Natural killer cell (primary cell): ENCODE measurements at regions of chr3 and their contacts with region 1.

Region 1: DNA sequence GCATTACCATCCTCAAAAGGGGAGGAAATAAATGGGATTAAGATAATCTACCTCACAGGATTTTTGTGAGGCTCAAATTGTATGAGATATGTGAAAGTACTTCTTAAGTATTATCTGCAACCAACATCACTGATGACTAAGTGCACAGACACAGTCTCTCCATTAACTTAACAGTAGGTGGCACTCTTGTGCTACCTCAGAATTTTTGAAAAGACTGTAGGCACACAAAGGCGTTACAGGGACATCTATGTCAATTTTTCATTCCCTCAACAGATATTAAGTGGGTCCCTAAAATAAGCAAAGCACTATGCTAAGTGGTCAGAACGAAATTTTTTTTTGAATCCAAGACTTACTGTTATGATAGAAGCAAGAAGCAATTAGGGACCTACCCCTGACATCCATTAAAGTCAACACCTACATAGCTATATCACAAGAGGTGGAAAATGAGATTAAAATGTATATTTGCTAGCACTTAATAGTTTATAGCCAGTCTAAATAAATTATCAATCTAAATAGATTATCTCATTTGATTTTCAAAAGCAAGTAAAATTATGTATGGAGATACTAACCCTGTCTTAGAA is 52.9 kb downstream of the RYK start:
- DNase-seq: peak in 1 of 2 donors; percentile 67
- ATAC-seq: peak; percentile 71 to 85 (median 84)
- H3K4me3 ChIP-seq: no peak overlapping the region
- H3K4me3 Mint-ChIP-seq: no peak overlapping the region
- H3K27ac ChIP-seq: no peak overlapping the region
- H3K27ac Mint-ChIP-seq: no peak overlapping the region
- H3K4me1 ChIP-seq: no peaks in the 10 kb centered on the region
- H3K4me1 Mint-ChIP-seq: no peaks in the 10 kb centered on the region
- H3K27me3 ChIP-seq: no peaks in the 10 kb centered on the region
- H3K27me3 Mint-ChIP-seq: no peaks in the 10 kb centered on the region
- CTCF ChIP-seq: peak; percentile 72

Region 2: GRCh38 chr3:134494495-134494894 is 296.7 kb after region 1 on chr3:
- intact Hi-C with region 1: loop called (anchors 5 kb)
- DNase-seq: no peak
- ATAC-seq: no peak
- H3K4me3 ChIP-seq: no peak overlapping the region
- H3K4me3 Mint-ChIP-seq: no peak overlapping the region
- H3K27ac ChIP-seq: no peak overlapping the region
- H3K27ac Mint-ChIP-seq: no peak overlapping the region
- H3K4me1 ChIP-seq: peaks cover 4% of the 10 kb centered on the region
- H3K4me1 Mint-ChIP-seq: peaks cover 35 to 43% of the 10 kb centered on the region in 2 donors
- H3K27me3 ChIP-seq: no peaks in the 10 kb centered on the region
- H3K27me3 Mint-ChIP-seq: no peaks in the 10 kb centered on the region
- CTCF ChIP-seq: no peak